ENCODE measurements at regions of chrX and their contacts with region 1.

Region 1: GRCh38 chrX:85111347-85111746 is 107.7 kb downstream of the APOOL start:
- DNase-seq: no peak
- H3K4me3 ChIP-seq: no peak overlapping the region
- H3K27ac ChIP-seq: no peak overlapping the region
- H3K27me3 ChIP-seq: peaks cover 0 to 75% (median 10%) of the 10 kb centered on the region in 45 donors
- CTCF ChIP-seq: peak; percentile 42 to 84 (median 67)

Region 2: DNA sequence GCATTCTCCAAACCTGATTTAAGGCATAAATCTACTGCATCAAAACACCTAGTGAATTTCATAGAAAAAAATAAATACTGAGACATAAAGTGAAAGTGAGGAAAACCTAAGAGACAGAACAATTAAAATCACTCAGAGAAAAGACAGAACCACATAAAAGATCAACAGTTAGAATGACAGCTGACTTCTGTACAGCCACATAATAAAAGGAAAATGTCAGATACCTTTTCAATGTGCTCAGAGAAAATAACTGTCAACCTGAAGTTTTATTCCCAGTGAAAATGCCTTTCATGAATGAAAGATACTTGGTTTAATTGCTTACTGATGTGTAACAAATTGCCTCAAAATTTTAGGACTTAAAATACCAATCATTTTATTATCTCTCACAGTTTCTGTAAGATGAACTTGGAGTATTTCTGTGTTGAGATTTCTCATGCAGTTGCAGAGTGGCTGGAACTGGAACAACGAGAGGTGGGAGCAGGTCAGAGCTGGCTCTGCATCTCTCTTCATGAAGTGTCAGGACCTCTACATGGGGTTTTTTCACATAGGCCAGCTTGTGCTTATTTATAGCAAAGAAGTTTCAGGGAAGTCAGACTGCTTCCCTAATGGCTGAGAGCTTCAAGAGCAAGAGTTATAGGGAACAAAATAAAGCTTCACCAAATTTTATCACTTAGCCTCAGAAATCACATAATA is 280.0 kb after region 1 on chrX:
- intact Hi-C with region 1: no loop called
- DNase-seq: no peak
- H3K4me3 ChIP-seq: no peak overlapping the region
- H3K27ac ChIP-seq: no peak overlapping the region
- H3K27me3 ChIP-seq: peaks cover 0 to 7% (median 0%) of the 10 kb centered on the region in 45 donors
- CTCF ChIP-seq: no peak

Region 3: GRCh38 chrX:85544609-85545008 is 433.3 kb after region 1 on chrX:
- intact Hi-C with region 1: loop called (anchors 10 kb)
- DNase-seq: no peak
- H3K4me3 ChIP-seq: no peak overlapping the region
- H3K27ac ChIP-seq: no peak overlapping the region
- H3K27me3 ChIP-seq: peaks cover 0 to 31% (median 3%) of the 10 kb centered on the region in 45 donors
- CTCF ChIP-seq: peak in 55 of 56 donors; percentile 15 to 73 (median 51)

Measured in dorsolateral prefrontal cortex (tissue), 120 donors.